ENCODE measurements at regions of chr10 and their contacts with region 1.

Region 1: GRCh38 chr10:68560186-68560942 is at the start of gene TET1:
- DNase-seq: peak in 5 of 9 experiments; percentile 5 to 48 (median 20)
- ATAC-seq: peak; percentile 40
- H3K4me3 ChIP-seq: peak within 1 kb of the TSS; percentile 45 to 46
- H3K4me3 Mint-ChIP-seq: peak within 1 kb of the TSS; percentile 83
- H3K27ac ChIP-seq: no peak within 1 kb of the TSS
- H3K27ac Mint-ChIP-seq: no peak within 1 kb of the TSS
- H3K4me1 ChIP-seq: peaks cover 28% of the 10 kb centered on the region
- H3K4me1 Mint-ChIP-seq: peaks cover 25% of the 10 kb centered on the region
- H3K27me3 ChIP-seq: peaks cover 21 to 32% of the 10 kb centered on the region in 2 experiments
- H3K27me3 Mint-ChIP-seq: peaks cover 55% of the 10 kb centered on the region
- CTCF ChIP-seq: no peak
- total RNA-seq, gene TET1: 1.2 to 1.4 TPM

Region 2: DNA sequence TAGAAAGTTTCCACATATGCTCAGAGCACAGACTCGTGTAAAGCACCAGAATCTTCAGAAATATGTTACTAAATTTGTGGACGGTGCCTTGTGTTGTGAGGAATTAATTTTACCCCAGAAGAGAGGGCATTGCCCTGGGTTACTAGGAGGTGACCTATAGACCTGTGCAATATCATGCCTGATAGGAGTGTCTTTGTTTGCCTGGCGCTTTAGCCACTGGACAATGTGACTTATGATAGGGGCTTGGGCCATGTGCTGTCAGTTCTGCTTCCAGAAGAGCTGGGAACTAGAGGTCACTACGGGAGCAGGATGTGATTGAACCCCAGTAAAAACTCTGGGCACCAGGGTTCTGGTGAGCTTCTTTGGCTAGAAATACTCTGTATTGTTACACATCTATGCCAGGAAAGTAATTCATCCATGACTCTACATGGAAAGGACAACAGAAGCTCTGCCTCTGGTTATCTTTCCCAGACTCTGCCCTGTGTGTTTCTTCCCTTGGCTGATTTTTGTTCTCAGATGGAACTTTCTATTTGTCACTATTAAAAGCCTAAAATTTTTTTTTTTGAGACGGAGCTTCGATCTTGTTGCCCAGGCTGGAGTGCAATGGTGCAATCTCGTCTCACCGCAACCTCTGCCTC is 600.4 kb before region 1 on chr10:
- CTCF ChIA-PET with region 1: no interaction called
- POLR2A ChIA-PET with region 1: no interaction called
- intact Hi-C with region 1: no loop called
- DNase-seq: no peak
- ATAC-seq: no peak
- H3K4me3 ChIP-seq: no peak overlapping the region
- H3K4me3 Mint-ChIP-seq: no peak overlapping the region
- H3K27ac ChIP-seq: no peak overlapping the region
- H3K27ac Mint-ChIP-seq: no peak overlapping the region
- H3K4me1 ChIP-seq: no peaks in the 10 kb centered on the region
- H3K4me1 Mint-ChIP-seq: no peaks in the 10 kb centered on the region
- H3K27me3 ChIP-seq: no peaks in the 10 kb centered on the region
- H3K27me3 Mint-ChIP-seq: no peaks in the 10 kb centered on the region
- CTCF ChIP-seq: no peak

Region 3: GRCh38 chr10:68600041-68600778 is 39.8 kb after region 1 on chr10:
- CTCF ChIA-PET with region 1: no interaction called
- POLR2A ChIA-PET with region 1: no interaction called
- intact Hi-C with region 1: loop called in 1 of 2 experiments (anchors 5 kb)
- DNase-seq: peak; percentile 9 to 80 (median 59)
- ATAC-seq: peak; percentile 92
- H3K4me3 ChIP-seq: peak overlapping the region; percentile 61 to 72
- H3K4me3 Mint-ChIP-seq: peak overlapping the region; percentile 94
- H3K27ac ChIP-seq: peak overlapping the region; percentile 33 to 47
- H3K27ac Mint-ChIP-seq: peak overlapping the region; percentile 89
- H3K4me1 ChIP-seq: peaks cover 20% of the 10 kb centered on the region
- H3K4me1 Mint-ChIP-seq: peaks cover 41% of the 10 kb centered on the region
- H3K27me3 ChIP-seq: no peaks in the 10 kb centered on the region
- H3K27me3 Mint-ChIP-seq: no peaks in the 10 kb centered on the region
- CTCF ChIP-seq: no peak